ENCODE measurements at regions of chr11 and their contacts with region 1.

Region 1: GRCh38 chr11:29019960-29020683 is 911.9 kb downstream of the METTL15 start:
- DNase-seq: peak in 1 of 2 experiments; percentile 26
- H3K4me3 ChIP-seq: no peak overlapping the region
- H3K27ac ChIP-seq: no peak overlapping the region
- H3K4me1 ChIP-seq: peaks cover 6% of the 10 kb centered on the region; the same call in 1 of the 2 replicates
- H3K27me3 ChIP-seq: no peaks in the 10 kb centered on the region
- CTCF ChIP-seq: peak; percentile 31; the same call in 1 of the 2 replicates

Region 2: GRCh38 chr11:28343276-28344233 is 676.6 kb before region 1 on chr11:
- CTCF ChIA-PET with region 1: no interaction called
- POLR2A ChIA-PET with region 1: no interaction called
- intact Hi-C with region 1: loop called (anchors 5 kb)
- DNase-seq: peak; percentile 38 to 61
- H3K4me3 ChIP-seq: no peak overlapping the region
- H3K27ac ChIP-seq: peak overlapping the region; percentile 81
- H3K4me1 ChIP-seq: peaks cover 37% of the 10 kb centered on the region
- H3K27me3 ChIP-seq: no peaks in the 10 kb centered on the region
- CTCF ChIP-seq: no peak

Region 3: DNA sequence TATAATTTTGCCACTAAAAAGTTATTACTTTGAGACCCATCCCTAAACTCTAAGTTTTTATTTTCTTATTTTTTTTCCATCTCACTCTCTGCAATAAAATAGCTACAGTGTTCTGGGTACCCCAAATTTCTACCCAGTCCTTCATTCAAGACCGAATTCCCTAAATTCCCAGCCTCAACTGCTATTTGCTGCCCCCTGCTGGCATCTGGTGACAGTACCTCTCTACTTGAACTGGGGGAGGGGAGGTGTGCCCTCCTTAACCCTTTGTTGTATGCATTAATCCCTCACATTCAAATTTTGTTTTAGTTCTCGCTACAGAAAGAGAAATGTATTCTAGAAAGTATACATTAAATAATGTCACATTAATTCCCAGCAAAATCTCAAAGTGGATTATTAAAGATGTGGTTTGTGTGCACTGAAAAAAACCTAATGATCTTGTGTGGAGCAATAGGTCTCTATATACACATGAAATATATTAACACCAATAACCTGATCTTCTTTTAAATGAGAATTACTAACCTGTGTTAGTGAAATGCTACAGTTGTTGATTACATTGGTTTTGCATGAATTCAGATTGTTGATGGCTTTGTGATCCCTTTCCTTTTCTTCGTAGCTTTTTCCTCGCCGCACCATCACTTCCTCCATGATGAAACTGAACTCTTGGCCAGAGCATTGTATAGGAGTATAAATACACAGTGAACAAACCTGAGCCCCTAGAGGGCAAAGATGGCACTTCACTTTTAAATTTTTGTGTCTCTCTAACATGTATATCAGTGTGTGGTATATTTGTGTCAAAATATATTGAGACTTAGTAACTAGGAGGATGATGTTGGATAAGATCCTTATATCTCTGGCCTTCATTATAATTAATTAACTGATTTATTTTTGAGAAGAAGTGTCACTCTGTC is 321.9 kb before region 1 on chr11:
- CTCF ChIA-PET with region 1: no interaction called
- POLR2A ChIA-PET with region 1: no interaction called
- intact Hi-C with region 1: loop called (anchors 2 kb)
- DNase-seq: peak in 1 of 2 experiments; percentile 37
- H3K4me3 ChIP-seq: no peak overlapping the region
- H3K27ac ChIP-seq: no peak overlapping the region
- H3K4me1 ChIP-seq: peaks cover 24% of the 10 kb centered on the region
- H3K27me3 ChIP-seq: no peaks in the 10 kb centered on the region
- CTCF ChIP-seq: peak; percentile 81

Region 4: GRCh38 chr11:28767574-28767973 is 252.5 kb before region 1 on chr11:
- CTCF ChIA-PET with region 1: no interaction called
- POLR2A ChIA-PET with region 1: no interaction called
- intact Hi-C with region 1: no loop called
- DNase-seq: no peak
- H3K4me3 ChIP-seq: no peak overlapping the region
- H3K27ac ChIP-seq: no peak overlapping the region
- H3K4me1 ChIP-seq: no peaks in the 10 kb centered on the region
- H3K27me3 ChIP-seq: no peaks in the 10 kb centered on the region
- CTCF ChIP-seq: no peak

Region 5: GRCh38 chr11:28938091-28938490 is 82.0 kb before region 1 on chr11:
- CTCF ChIA-PET with region 1: no interaction called
- POLR2A ChIA-PET with region 1: no interaction called
- intact Hi-C with region 1: loop called (anchors 5 kb)
- DNase-seq: peak; percentile 35 to 46
- H3K4me3 ChIP-seq: no peak overlapping the region
- H3K27ac ChIP-seq: no peak overlapping the region
- H3K4me1 ChIP-seq: peaks cover 6% of the 10 kb centered on the region
- H3K27me3 ChIP-seq: no peaks in the 10 kb centered on the region
- CTCF ChIP-seq: no peak

Region 6: DNA sequence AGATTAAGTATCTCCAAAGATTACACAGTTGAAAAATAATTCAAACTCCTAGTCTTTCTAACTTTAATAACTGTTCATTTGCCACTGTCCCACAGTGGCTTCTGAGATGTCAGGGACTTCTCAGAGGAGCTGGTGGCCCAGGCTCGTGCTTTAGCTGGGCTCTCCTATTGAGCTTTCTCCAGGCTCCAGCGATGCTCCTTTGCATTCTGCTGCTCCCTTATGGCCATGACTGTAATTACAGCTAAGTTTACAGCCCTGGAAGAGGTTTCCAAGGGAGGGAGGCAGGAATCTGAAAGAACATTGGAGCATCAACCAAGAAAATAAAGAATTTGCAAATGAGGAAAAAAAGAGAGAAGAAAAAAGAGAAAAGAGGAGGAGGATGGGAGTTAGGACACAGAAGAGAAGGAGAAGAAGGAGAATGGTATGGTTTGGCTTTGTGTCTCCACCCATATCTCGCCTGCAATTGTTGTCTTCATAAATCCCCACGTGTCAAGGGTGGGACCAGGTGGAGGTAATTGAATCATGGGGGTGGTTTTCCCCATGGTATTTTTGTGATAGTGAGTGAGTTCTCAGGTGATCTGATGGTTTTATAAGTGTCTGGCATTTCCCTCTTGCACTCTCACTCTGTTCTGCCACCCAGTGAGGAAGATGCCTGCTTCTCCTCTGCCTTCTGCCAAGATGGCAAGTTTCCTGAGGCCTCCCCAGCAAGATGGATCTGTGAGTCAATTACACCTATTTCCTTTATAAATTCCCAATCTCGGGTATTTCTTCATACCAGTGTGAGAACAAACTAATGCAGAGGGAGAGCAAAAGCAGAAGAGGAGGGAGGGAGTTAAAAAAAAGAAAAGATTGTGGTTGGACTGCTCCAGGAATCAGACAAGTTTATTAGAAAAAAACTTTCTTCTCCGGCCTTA is 139.7 kb after region 1 on chr11:
- CTCF ChIA-PET with region 1: no interaction called
- POLR2A ChIA-PET with region 1: no interaction called
- intact Hi-C with region 1: loop called (anchors 10 kb)
- DNase-seq: peak in 1 of 2 experiments; percentile 48
- H3K4me3 ChIP-seq: no peak overlapping the region
- H3K27ac ChIP-seq: no peak overlapping the region
- H3K4me1 ChIP-seq: no peaks in the 10 kb centered on the region
- H3K27me3 ChIP-seq: no peaks in the 10 kb centered on the region
- CTCF ChIP-seq: peak; percentile 79

Region 7: GRCh38 chr11:29328961-29329441 is 308.9 kb after region 1 on chr11:
- CTCF ChIA-PET with region 1: interaction called, 3 read pairs
- POLR2A ChIA-PET with region 1: no interaction called
- intact Hi-C with region 1: loop called (anchors 5 kb)
- DNase-seq: peak in 1 of 2 experiments; percentile 40
- H3K4me3 ChIP-seq: no peak overlapping the region
- H3K27ac ChIP-seq: no peak overlapping the region
- H3K4me1 ChIP-seq: no peaks in the 10 kb centered on the region
- H3K27me3 ChIP-seq: no peaks in the 10 kb centered on the region
- CTCF ChIP-seq: peak; percentile 73